AG04449 (cell line): ENCODE measurements at regions of chr2 and their contacts with region 1.

Region 1: GRCh38 chr2:37414470-37414949 is 70.1 kb downstream of the QPCT start:
- DNase-seq: no peak
- H3K4me3 ChIP-seq: no peak overlapping the region
- CTCF ChIP-seq: peak; percentile 75

Region 2: GRCh38 chr2:37205689-37206341 is 208.7 kb before region 1 on chr2:
- CTCF ChIA-PET with region 1: no interaction called
- POLR2A ChIA-PET with region 1: no interaction called
- DNase-seq: no peak
- H3K4me3 ChIP-seq: no peak overlapping the region
- CTCF ChIP-seq: no peak

Region 3: GRCh38 chr2:37389989-37390765 is 24.3 kb before region 1 on chr2:
- CTCF ChIA-PET with region 1: interaction called, 100 read pairs
- POLR2A ChIA-PET with region 1: no interaction called
- DNase-seq: no peak
- H3K4me3 ChIP-seq: no peak overlapping the region; the same call in 1 of the 2 replicates
- CTCF ChIP-seq: no peak

Region 4: DNA sequence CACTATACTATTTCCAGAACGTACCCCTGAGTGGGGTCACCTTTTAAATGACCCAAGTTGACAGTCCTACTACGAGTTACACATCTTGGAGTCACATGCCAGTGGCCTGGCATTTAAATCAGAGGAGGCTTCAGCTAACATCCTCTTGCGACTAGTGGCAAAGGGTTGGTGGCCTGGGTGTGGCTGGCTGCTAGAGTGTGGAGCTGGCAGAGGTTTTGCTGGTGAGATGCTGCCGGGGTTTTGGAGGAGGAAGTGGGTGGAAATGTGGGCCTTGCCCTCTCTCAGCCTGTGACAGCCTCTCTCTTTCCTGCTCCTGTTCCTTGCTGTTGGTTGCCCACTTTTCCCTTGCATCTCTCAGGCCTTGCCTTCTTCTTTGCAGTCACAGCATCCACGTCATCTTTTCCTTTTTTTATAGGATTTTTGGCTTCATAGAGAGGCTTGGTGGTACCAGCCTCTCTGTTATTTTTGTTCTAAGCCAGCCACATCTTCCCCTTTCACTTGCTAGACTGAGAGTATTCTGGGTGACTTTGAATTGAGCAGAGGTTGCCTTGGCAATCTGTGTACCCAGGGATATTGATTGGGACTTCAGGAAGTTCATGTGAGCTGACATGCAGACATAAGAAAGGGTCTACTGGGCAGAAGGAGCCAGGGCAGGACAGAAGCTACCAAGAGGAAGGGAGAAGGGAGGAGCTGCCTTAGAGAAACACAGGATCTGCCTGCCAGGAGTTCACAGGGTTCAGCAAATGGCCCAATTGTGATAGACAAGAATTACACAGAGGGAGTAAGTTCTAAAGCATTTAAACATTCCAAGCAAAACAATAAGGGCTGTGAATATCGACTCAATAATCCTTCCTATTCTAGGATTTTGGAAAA is 201.5 kb after region 1 on chr2:
- CTCF ChIA-PET with region 1: interaction called, 14 read pairs
- POLR2A ChIA-PET with region 1: no interaction called
- DNase-seq: no peak
- H3K4me3 ChIP-seq: no peak overlapping the region
- CTCF ChIP-seq: no peak

Region 5: DNA sequence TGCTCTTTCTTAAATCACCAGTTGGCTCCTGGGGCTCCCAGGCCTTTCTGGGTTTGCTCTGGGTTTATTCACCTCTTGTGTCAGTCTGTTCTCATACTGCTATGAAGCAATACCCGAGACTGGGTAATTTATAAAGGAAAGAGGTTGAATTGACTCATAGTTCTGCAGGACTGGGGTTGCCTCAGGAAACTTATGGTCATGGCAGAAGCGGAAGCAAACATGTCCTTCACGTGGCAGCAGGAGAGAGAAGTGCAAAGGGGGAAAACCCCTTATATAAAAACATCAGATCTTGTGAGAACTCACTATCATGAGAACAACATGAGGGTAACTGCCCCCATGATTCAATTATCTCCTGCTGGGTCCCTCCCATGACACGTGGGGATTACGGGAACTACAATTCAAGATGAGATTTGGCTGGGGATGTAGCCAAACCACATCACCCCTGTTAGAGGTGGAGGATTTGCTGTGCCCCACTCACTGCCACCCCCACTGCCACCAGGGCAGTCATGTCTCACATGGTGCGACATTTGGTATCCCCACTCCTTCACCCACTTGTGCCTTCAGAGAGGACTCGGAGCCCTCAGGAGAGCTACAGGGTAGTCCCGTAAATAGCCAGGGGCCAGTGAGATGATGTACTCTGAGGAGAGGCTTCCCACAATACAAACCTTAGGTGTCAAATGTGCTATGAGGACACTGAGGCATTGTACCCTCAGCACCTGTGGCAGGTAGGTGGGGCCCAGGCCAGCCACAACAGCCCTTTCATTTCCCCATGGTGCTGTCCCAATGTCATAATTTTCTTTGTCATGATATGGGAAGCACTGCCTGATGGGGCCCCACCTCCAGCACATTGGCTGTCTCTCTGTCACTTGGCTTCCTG is 221.2 kb after region 1 on chr2:
- CTCF ChIA-PET with region 1: interaction called, 25 read pairs
- POLR2A ChIA-PET with region 1: interaction called, 4 read pairs
- DNase-seq: no peak
- H3K4me3 ChIP-seq: no peak overlapping the region
- CTCF ChIP-seq: no peak

Region 6: DNA sequence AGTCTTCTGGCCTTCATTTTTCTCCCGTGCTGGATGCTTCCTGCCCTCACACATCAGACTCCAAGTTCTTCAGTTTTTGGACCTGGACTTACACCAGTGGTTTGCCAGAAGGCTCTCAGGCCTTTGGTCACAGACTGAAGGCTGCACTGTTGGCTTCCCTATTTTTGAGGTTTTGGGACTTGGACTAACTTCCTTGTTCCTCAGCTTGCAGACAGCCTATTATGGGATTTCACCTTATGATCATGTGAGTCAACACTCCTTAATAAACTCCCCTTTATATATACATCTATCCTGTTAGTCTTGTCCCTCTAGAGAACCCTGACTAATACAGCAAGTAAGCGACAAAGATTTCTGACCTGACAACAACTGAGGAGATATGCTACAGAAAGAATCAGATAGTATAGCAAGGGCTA is 249.7 kb after region 1 on chr2:
- CTCF ChIA-PET with region 1: interaction called, 23 read pairs
- POLR2A ChIA-PET with region 1: interaction called, 3 read pairs
- DNase-seq: no peak
- H3K4me3 ChIP-seq: peak overlapping the region; percentile 40
- CTCF ChIP-seq: no peak

Region 7: GRCh38 chr2:37851828-37852584 is 437.5 kb after region 1 on chr2:
- CTCF ChIA-PET with region 1: interaction called, 13 read pairs
- POLR2A ChIA-PET with region 1: no interaction called
- DNase-seq: no peak
- H3K4me3 ChIP-seq: no peak overlapping the region
- CTCF ChIP-seq: no peak

Region 8: DNA sequence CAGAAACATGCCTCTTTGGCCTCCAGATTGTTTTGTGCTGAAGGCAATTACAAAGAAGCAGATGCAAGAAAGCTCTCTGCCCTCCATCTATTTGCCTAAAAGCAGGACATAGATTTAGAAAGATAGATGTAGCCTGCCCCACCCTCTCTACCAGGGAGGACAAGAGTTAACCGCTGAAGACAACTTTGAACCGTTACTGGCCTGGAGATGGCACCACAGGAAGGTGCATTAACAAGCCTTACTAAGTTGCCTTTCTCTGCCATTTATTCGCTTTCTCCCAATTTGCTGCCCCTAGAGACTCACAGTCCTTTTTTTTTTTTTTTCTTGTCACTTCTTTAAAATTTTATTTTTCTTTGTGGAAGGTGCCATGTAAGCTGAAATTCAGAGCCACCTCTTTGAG is 481.8 kb after region 1 on chr2:
- CTCF ChIA-PET with region 1: interaction called, 55 read pairs
- POLR2A ChIA-PET with region 1: no interaction called
- DNase-seq: no peak
- H3K4me3 ChIP-seq: no peak overlapping the region
- CTCF ChIP-seq: no peak